ENCODE measurements at regions of chr1 and their contacts with region 1.

Region 1: DNA sequence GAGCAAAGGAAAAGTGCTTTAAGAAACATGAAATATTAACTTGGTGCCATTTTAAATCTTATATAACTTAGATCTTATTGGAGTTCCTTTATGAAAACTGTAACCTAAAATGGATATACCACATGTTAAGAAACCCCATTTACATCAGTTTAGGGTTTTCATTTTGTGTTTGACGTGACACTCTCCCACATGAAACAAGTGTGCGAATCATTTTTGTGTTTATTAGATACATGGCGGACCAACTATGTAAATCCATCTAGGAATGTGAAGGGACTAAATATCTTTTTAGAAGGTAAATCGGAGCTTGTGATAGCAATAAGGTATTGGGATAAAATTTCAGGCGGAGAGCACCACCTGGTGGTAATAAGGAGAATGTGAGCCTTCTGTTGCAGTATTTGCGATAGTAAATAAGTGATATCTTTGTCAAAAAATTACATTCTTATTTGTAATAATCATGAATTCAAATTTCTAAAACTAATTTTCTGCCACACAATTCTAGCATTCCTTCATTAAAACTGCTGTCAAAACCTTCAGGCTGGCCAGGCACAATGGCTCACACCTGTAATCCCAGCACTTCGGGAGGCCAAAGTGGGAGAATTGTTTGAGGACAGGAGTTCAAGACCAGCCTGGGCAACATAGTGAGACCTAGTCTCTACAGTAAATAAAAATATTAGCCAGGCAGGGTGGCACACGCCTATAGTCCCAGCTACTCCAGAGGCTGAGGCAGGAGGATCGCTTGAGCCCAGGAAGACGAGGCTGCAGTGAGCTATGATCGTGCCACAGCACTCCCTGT is 31.3 kb downstream of the SMAP2 start:
- DNase-seq: no peak
- H3K4me3 ChIP-seq: no peak overlapping the region
- H3K27ac ChIP-seq: no peak overlapping the region
- H3K4me1 ChIP-seq: no peaks in the 10 kb centered on the region
- H3K27me3 ChIP-seq: no peaks in the 10 kb centered on the region
- CTCF ChIP-seq: peak; percentile 68 to 79 (median 79)

Region 2: DNA sequence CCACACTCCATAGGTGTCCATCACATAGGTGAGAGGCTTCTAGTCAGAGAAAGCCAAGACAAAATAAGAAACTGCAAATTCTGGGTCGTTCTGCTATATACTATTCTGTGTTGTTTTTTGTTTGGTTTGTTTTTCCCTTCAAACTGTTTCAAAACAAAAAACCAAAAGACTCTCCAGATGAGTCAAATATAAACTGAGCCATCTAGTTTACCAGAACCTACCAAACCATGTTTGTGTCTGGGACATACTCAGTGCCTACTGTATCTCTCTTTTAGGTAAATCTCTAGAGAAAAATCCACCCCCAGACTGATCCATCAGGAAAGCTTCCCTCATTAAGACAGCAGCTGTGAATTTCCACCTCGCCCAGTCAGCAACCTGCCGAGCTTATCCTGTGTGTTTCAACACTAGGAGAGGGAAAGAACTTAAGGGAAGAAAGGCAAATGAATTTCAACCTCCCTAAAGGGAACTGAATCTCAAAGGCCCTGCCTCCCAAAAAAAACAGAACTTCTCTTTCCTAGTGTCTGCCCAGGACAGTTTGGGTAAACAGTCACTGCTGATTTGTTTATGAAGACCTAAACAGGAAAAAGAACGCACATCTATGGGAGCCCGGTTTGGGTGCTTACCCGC is 325.0 kb before region 1 on chr1:
- intact Hi-C with region 1: loop called (anchors 2 kb)
- DNase-seq: no peak
- H3K4me3 ChIP-seq: no peak overlapping the region
- H3K27ac ChIP-seq: no peak overlapping the region
- H3K4me1 ChIP-seq: no peaks in the 10 kb centered on the region
- H3K27me3 ChIP-seq: no peaks in the 10 kb centered on the region
- CTCF ChIP-seq: no peak

Region 3: GRCh38 chr1:40143891-40144575 is 260.8 kb before region 1 on chr1:
- intact Hi-C with region 1: loop called (anchors 1 kb)
- DNase-seq: peak in 1 of 2 donors; percentile 79
- H3K4me3 ChIP-seq: no peak overlapping the region
- H3K27ac ChIP-seq: no peak overlapping the region
- H3K4me1 ChIP-seq: no peaks in the 10 kb centered on the region
- H3K27me3 ChIP-seq: no peaks in the 10 kb centered on the region
- CTCF ChIP-seq: peak; percentile 65 to 85 (median 73)